ENCODE measurements at regions of chr5 and their contacts with region 1.

Region 1: DNA sequence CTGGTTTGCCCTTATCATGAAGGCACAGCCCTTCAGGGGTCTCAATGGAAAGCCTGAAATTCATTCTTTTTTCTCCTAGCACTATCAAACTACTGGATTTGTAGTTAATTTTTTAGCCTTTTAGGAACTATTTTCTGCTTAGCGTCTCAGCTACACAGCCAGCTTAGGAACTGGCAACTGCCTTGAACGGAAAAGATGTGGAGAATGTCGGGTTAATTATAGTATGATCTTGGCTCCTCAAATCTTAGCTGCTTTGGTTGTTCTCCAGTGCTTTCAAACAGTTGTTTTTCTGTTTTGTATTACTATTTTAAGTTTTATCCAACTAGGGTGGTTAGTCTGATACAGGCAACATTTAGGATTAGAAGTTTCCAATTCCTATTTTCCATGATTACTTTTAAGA is 44.1 kb downstream of the CCNH start:
- DNase-seq: no peak
- H3K4me3 ChIP-seq: no peak overlapping the region
- H3K27ac ChIP-seq: no peak overlapping the region
- H3K27me3 ChIP-seq: no peaks in the 10 kb centered on the region
- CTCF ChIP-seq: no peak

Region 2: DNA sequence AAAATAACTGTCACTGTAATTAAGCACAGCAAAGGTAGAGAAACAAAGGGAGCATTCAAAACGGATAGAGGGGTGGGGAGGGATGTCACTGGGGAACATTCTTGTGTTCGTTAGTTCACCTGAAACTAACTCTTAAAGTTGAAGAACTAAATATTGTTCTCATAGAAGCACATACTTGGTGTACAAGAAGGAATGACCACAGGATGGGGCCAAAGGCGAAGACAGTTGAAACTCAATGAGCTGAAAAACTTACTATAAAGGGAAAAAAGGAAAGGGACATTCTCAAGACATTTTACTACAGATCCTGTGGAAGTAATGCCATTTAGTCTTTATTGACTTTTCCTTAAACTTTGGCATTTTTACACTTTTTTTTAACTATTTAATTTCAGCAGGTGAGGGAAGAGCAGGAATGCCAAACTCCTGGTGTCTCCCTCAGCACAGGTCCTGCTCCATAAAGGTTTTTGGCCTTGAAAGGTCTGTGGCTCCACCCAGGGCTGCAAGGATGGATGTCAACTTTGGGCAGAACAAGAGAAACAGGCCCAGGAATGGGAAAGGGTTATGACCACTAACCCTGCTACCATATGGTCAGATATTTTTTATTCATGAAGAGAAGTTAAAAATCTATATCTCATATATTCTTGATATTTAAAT is 298.5 kb before region 1 on chr5:
- CTCF ChIA-PET with region 1: interaction called, 10 read pairs
- POLR2A ChIA-PET with region 1: no interaction called
- DNase-seq: peak; percentile 36
- H3K4me3 ChIP-seq: no peak overlapping the region
- H3K27ac ChIP-seq: no peak overlapping the region
- H3K27me3 ChIP-seq: no peaks in the 10 kb centered on the region
- CTCF ChIP-seq: peak; percentile 68

Region 3: DNA sequence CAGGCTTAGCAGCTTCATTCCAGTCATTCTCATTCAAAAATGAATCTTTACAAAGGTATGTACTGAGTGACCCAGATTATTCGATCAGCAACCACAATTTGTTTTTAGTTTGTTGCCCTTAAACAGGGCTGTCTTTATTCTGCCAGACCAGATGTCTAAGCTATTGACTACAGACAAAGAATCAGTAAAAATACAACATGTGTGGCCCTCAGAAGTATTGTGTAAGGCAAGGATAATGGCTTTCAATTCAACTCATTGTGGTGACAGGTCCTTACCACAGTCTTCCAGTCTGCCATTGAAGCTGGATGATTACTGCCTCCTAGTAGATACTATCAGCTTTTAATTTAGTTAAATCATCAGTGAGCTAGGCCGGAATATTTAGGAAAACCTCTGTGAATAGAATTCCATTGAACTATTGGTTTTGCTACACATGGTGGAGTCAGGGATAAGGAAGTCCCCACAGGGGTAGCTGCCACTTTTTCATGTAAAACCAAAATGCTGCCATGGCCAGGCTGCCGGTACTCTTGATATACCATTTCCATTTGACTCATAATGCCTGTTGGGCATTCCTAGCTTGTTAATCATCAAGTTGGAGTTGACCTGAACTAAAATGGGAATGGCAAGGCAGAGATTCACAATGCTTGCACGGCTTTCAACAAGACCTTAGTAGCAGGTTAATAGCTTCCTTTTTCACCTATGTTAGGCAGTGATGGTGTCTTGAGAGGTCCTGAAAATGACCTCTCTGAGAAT is 1338.8 kb after region 1 on chr5:
- CTCF ChIA-PET with region 1: no interaction called
- POLR2A ChIA-PET with region 1: no interaction called
- DNase-seq: no peak
- H3K4me3 ChIP-seq: no peak overlapping the region
- H3K27ac ChIP-seq: no peak overlapping the region
- H3K27me3 ChIP-seq: no peaks in the 10 kb centered on the region
- CTCF ChIP-seq: no peak

Measured in AG04450 (cell line).